Activated CD8-positive, alpha-beta T cell treated with anti-CD3 and anti-CD28 coated beads, Interleukin-2, amount 10 ng/mL, durations not matched to agents 7 days and 5 days (primary cell): ENCODE measurements at regions of chr7 and their contacts with region 1.

Region 1: GRCh38 chr7:151368136-151368571 is 26.5 kb downstream of the NUB1 start:
- DNase-seq: peak; percentile 84
- ATAC-seq: peak; percentile 99
- H3K4me3 Mint-ChIP-seq: no peak overlapping the region
- H3K27ac Mint-ChIP-seq: no peak overlapping the region
- H3K4me1 Mint-ChIP-seq: peaks cover 17% of the 10 kb centered on the region
- H3K27me3 Mint-ChIP-seq: no peaks in the 10 kb centered on the region

Region 2: GRCh38 chr7:151322906-151323305 is 45.2 kb before region 1 on chr7:
- CTCF ChIA-PET with region 1: no interaction called
- POLR2A ChIA-PET with region 1: no interaction called
- DNase-seq: no peak
- ATAC-seq: no peak
- H3K4me3 Mint-ChIP-seq: no peak overlapping the region
- H3K27ac Mint-ChIP-seq: no peak overlapping the region
- H3K4me1 Mint-ChIP-seq: no peaks in the 10 kb centered on the region
- H3K27me3 Mint-ChIP-seq: peaks cover 9% of the 10 kb centered on the region

Region 3: DNA sequence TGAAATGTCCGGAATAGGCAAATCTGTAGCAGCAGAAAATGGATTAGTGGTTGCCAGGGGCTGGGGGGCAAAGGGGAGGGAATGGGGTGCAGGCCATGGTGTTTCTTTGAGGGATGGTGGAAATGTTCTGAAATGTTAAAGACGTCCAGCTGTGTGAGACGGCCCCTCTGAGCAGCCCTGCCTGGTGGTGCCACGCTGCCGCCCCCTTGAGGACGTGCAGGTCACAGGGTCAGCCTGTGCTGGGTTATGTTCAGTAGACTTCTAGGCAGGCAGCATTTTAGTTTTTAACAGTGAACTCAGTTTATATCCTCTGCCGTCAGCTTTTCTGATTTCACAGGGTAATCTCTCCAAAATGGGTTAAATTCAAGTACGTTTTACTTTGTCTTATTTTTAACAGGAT is 17.1 kb before region 1 on chr7:
- CTCF ChIA-PET with region 1: interaction called, 46 read pairs
- POLR2A ChIA-PET with region 1: no interaction called
- DNase-seq: peak; percentile 63
- ATAC-seq: no peak
- H3K4me3 Mint-ChIP-seq: peak overlapping the region; percentile 51
- H3K27ac Mint-ChIP-seq: peak overlapping the region; percentile 90
- H3K4me1 Mint-ChIP-seq: peaks cover 47% of the 10 kb centered on the region
- H3K27me3 Mint-ChIP-seq: no peaks in the 10 kb centered on the region

Region 4: DNA sequence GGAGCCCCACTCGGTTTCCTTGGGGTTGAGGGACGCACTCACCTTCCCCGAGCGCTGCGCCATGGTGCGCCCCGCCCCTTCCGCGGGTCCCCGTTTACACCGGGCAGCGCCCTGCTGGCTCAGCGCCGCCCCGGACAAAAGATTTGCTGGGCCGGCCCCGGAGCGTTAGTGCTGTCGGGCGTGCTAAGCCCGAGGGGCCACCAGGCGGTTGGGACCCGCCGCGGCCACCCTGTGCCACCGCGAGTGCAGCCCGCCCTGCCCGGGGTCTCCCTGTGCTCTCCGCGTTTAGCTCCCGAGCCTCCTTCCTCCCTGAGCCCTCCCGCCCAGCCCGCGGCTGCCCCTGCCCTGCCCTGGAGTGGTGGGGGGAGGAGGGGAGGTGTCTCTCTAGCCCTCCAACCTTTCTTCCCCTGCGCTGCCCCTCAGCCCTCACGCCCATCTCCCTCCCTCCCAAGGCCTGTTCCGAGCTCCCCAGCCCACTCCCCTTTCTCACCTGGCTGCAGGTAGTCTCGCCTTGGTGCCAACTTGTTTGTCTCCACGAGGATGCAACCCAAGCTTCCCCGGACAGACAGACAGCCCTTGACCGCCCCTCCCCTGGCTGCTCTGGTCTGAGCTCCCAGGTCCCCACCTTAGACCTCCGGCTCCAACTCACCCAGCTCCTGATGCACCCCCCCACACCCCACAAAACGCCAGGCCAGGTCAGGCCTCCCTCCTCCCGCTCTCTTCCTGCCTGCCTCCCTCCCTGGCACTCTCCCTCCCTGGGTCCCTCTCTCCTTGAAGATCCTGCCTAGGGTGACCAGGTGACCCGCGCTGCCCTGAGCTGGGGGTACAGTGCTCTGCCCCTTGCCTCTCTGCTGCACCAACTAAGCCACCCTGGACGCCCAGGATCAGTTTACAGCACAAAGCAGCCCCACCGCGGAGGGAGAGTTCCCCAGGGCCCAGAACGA is 72.0 kb after region 1 on chr7 and contains the start of gene CRYGN:
- CTCF ChIA-PET with region 1: interaction called, 14 read pairs
- POLR2A ChIA-PET with region 1: no interaction called
- DNase-seq: no peak
- ATAC-seq: peak; percentile 47
- H3K4me3 Mint-ChIP-seq: peak within 1 kb of the TSS; percentile 25
- H3K27ac Mint-ChIP-seq: peak within 1 kb of the TSS; percentile 65
- H3K4me1 Mint-ChIP-seq: peaks cover 20% of the 10 kb centered on the region
- H3K27me3 Mint-ChIP-seq: peaks cover 5% of the 10 kb centered on the region
- total RNA-seq, gene CRYGN: 0.34 to 0.50 TPM